CD14-positive monocyte (primary cell): ENCODE measurements at regions of chr3 and their contacts with region 1.

Region 1: DNA sequence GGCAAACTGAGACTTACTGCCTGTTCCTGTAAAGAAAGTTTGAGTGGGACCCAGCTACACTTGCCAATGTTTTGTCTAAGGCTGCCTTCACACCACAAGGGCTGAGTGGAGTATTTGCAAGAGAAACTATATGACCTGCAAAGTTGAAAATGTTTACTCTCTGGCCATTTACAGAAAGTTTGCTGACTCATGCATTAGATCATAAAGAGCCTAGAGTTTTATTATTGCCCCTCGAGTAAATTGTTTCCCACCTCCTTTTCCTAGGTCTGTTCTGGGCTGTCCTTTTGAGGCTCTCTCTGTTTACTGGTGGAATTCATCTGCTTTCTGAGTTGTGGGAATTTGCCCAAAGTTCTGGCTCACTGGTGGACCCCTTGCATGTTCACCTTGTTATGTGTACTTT is 6.7 kb upstream of the PROK2 start:
- DNase-seq: no peak
- H3K4me3 ChIP-seq: no peak overlapping the region
- H3K4me3 Mint-ChIP-seq: no peak overlapping the region
- H3K27ac ChIP-seq: no peak overlapping the region
- H3K27ac Mint-ChIP-seq: no peak overlapping the region
- H3K4me1 ChIP-seq: peaks cover 0 to 9% of the 10 kb centered on the region in 2 donors
- H3K4me1 Mint-ChIP-seq: peaks cover 20% of the 10 kb centered on the region
- H3K27me3 ChIP-seq: peaks cover 0 to 11% of the 10 kb centered on the region in 2 donors
- H3K27me3 Mint-ChIP-seq: peaks cover 3 to 8% (median 4%) of the 10 kb centered on the region in 3 donors
- CTCF ChIP-seq: no peak

Region 2: DNA sequence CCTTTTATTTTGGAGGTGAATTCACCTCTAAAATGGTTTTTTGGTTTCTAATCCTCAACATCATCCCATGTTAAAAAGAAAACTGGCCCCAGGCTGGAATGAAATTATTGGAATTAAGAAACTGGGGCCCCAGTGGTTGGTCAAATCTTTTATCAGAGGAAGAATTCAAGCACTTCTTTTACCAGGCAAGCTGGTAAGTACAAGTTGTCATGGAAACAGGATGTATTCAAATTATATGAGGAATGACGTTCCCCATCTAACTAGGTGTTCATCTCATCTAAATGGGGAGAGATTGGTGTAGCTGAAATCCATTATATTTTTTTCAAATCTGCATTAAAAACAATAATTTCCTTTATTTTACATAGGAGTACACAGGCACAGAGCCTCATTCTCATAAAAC is 56.8 kb before region 1 on chr3:
- intact Hi-C with region 1: no loop called
- DNase-seq: no peak
- H3K4me3 ChIP-seq: no peak overlapping the region
- H3K4me3 Mint-ChIP-seq: no peak overlapping the region
- H3K27ac ChIP-seq: no peak overlapping the region
- H3K27ac Mint-ChIP-seq: no peak overlapping the region
- H3K4me1 ChIP-seq: peaks cover 4% of the 10 kb centered on the region in 2 donors
- H3K4me1 Mint-ChIP-seq: peaks cover 13% of the 10 kb centered on the region
- H3K27me3 ChIP-seq: no peaks in the 10 kb centered on the region
- H3K27me3 Mint-ChIP-seq: peaks cover 2 to 7% (median 3%) of the 10 kb centered on the region in 3 donors
- CTCF ChIP-seq: no peak

Region 3: GRCh38 chr3:71754484-71755253 is 37.0 kb before region 1 on chr3:
- intact Hi-C with region 1: loop called in 1 of 2 experiments (anchors 5 kb)
- DNase-seq: peak in 1 of 3 donors; percentile 16
- H3K4me3 ChIP-seq: peak overlapping the region; percentile 37 to 90 (median 83)
- H3K4me3 Mint-ChIP-seq: peak overlapping the region; percentile 87 to 91
- H3K27ac ChIP-seq: peak overlapping the region in 1 of 2 donors; percentile 79
- H3K27ac Mint-ChIP-seq: peak overlapping the region in 6 of 7 donors; percentile 62 to 96 (median 90)
- H3K4me1 ChIP-seq: peaks cover 25 to 42% of the 10 kb centered on the region in 2 donors
- H3K4me1 Mint-ChIP-seq: peaks cover 51% of the 10 kb centered on the region
- H3K27me3 ChIP-seq: peaks cover 5 to 42% of the 10 kb centered on the region in 2 donors
- H3K27me3 Mint-ChIP-seq: peaks cover 20 to 28% (median 24%) of the 10 kb centered on the region in 3 donors
- CTCF ChIP-seq: no peak